Caco-2 (cell line): ENCODE measurements at regions of chr2 and their contacts with region 1.

Region 1: DNA sequence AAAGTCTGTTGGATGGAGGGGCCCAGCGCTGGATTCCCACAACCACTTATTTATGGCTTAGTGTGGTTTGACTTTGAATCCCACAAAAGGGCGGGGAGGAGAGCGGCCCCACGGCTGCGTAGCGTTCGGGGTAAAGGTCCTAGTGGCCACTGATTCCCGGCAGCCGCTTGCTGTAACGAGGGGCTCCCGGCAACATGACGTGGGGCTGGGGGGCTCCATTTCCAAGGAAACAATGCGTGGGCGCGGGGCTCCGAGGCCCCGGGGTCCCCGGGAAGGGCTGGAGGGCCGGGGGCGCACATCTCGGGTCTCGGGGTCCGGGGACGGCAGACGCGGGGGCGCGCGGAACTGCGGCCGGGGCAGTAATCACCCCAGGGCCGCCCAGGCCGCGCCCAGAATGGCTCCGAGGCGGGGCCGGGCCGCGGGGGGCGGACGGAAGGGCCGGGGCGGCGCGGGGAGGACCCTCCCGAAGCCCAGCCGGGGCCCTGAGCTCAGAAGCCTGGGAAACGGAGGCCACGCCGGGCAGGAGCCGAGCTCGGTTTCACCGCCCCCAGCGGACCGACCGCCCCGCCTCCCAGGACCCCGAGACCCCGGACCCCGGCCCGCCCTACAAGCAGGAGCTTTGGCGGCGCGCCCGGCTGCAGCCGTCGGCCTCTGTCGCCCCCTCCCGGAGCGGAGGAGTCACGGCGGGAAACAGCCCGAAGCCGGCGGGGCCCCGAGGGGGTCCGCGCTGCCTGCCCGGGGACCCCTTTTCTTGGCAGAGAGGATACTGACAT is 11.9 kb upstream of the MLPH start:
- DNase-seq: peak; percentile 82 to 83
- H3K4me3 ChIP-seq: peak overlapping the region; percentile 35
- H3K4me3 Mint-ChIP-seq: peak overlapping the region; percentile 82
- H3K27ac Mint-ChIP-seq: peak overlapping the region; percentile 57
- H3K4me1 ChIP-seq: 0 out of 2 replicates have a peak, but pooled peaks cover 7% of the 10 kb centered on the region
- H3K4me1 Mint-ChIP-seq: no peaks in the 10 kb centered on the region
- H3K27me3 ChIP-seq: no peaks in the 10 kb centered on the region
- H3K27me3 Mint-ChIP-seq: peaks cover 3% of the 10 kb centered on the region
- CTCF ChIP-seq: peak; percentile 63 to 73

Region 2: DNA sequence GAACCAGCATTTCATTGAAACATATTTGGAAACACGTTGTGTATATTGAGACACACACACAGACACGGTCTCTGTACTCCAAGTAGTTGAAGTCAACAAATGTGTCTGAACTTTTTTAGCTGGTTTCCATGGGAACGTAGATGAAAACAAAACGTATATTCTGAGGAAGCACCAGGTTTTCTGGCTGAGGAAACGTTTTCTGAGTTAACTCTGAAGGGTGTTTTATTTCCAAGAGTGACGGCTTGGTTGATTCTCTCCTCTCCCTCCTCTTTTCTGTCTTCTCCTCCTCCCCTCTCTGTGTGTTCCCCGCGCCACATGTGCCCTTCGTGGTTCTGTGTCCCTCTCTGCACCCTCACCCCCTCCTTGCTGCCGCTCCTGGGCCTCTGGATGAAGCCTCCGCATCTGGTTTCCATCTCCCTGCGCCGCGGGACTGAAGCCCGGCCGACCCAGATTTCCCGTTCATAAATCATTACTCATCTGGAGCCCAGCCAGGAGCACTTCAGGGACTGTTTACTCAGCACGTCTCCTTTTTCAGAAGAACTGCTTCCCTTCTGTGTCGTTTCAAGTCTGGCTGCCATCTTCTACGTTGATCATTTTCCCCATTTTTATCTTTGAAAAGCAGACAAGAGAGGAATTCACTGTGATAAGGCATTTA is 183.9 kb before region 1 on chr2:
- CTCF ChIA-PET with region 1: no interaction called
- POLR2A ChIA-PET with region 1: no interaction called
- intact Hi-C with region 1: no loop called
- DNase-seq: peak; percentile 6 to 52
- H3K4me3 ChIP-seq: no peak overlapping the region
- H3K4me3 Mint-ChIP-seq: peak overlapping the region; percentile 55
- H3K27ac Mint-ChIP-seq: peak overlapping the region; percentile 31
- H3K4me1 ChIP-seq: no peaks in the 10 kb centered on the region
- H3K4me1 Mint-ChIP-seq: peaks cover 7% of the 10 kb centered on the region
- H3K27me3 ChIP-seq: no peaks in the 10 kb centered on the region
- H3K27me3 Mint-ChIP-seq: peaks cover 2% of the 10 kb centered on the region
- CTCF ChIP-seq: no peak

Region 3: DNA sequence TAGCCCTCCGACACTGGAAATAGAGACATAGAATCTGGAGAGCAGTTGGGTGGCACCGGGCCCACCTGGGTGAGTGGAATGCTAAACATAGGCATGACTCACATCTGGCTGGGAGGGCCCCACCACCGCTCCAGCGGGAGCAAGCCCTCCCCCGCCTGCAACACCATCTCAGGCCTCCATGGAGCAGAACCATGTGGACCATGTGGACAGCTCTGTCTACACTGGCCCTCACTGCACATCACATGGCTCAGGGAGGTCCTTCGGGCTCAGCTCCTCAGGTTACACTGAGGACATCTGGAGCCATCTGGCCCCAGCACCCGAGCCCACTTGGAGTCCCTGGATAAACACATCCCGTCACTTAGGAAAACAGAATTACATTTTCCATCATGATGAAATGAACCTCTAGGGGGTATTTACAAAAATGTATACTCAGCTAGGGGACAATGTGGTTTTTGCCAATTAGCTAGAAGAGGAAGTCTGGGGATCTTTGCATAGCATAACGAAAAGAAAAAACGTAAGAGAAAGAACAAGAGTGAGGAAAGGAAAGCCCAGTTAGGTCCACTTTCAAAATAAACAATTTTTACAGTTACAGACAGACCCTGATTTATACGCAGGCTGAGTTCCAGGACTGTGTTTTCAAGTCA is 18.8 kb before region 1 on chr2:
- CTCF ChIA-PET with region 1: no interaction called
- POLR2A ChIA-PET with region 1: no interaction called
- intact Hi-C with region 1: no loop called
- DNase-seq: no peak
- H3K4me3 ChIP-seq: no peak overlapping the region
- H3K4me3 Mint-ChIP-seq: no peak overlapping the region
- H3K27ac Mint-ChIP-seq: no peak overlapping the region
- H3K4me1 ChIP-seq: no peaks in the 10 kb centered on the region
- H3K4me1 Mint-ChIP-seq: no peaks in the 10 kb centered on the region
- H3K27me3 ChIP-seq: no peaks in the 10 kb centered on the region
- H3K27me3 Mint-ChIP-seq: peaks cover 10% of the 10 kb centered on the region
- CTCF ChIP-seq: no peak

Region 4: GRCh38 chr2:237524631-237525030 is 49.5 kb after region 1 on chr2:
- CTCF ChIA-PET with region 1: no interaction called
- POLR2A ChIA-PET with region 1: no interaction called
- intact Hi-C with region 1: no loop called
- DNase-seq: no peak
- H3K4me3 ChIP-seq: no peak overlapping the region
- H3K4me3 Mint-ChIP-seq: no peak overlapping the region
- H3K27ac Mint-ChIP-seq: no peak overlapping the region
- H3K4me1 ChIP-seq: no peaks in the 10 kb centered on the region
- H3K4me1 Mint-ChIP-seq: no peaks in the 10 kb centered on the region
- H3K27me3 ChIP-seq: no peaks in the 10 kb centered on the region
- H3K27me3 Mint-ChIP-seq: no peaks in the 10 kb centered on the region
- CTCF ChIP-seq: no peak

Region 5: DNA sequence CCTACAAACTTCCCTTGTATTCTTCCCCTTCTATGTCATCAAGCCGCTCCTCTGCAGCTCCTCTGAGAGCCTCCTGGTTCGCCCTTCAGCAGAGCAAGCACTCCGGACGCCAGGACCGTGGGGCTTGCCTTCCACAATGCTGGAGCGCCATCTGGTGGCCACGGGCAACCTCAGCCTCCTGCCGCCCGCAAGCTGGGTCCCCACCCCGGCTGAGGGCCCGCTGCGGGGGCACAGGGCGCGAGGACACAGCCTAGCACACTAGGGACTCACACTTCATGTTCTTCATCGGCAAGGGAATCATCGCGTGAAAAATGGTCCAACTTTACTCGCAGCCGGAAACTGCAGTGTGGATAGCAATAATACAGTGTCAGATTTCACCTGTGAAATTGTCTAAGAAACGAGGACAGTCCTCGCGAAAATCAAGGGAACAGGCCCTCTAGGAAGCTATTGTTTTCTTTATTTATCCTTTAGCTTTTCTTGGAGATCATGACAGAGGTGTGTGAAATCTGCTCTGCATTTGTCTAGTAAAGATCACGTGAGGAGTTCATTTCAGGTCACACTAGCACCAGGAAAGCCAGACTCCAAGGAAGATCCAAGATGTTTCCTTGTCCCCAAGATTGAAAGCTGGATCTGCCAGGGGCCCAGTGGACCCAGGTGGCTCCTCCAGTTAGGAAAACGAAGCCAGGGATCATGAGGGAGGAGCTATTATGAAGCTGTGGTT is 97.1 kb after region 1 on chr2:
- CTCF ChIA-PET with region 1: interaction called, 15 read pairs
- POLR2A ChIA-PET with region 1: interaction called, 6 read pairs
- intact Hi-C with region 1: loop called (anchors 1 kb)
- DNase-seq: peak; percentile 82 to 86
- H3K4me3 ChIP-seq: no peak overlapping the region
- H3K4me3 Mint-ChIP-seq: no peak overlapping the region
- H3K27ac Mint-ChIP-seq: peak overlapping the region; percentile 25
- H3K4me1 ChIP-seq: no peaks in the 10 kb centered on the region
- H3K4me1 Mint-ChIP-seq: peaks cover 8% of the 10 kb centered on the region
- H3K27me3 ChIP-seq: no peaks in the 10 kb centered on the region
- H3K27me3 Mint-ChIP-seq: no peaks in the 10 kb centered on the region
- CTCF ChIP-seq: peak; percentile 79 to 90